Cardiac septum (tissue), 1 donor: ENCODE measurements at regions of chr19 and their contacts with region 1.

Region 1: DNA sequence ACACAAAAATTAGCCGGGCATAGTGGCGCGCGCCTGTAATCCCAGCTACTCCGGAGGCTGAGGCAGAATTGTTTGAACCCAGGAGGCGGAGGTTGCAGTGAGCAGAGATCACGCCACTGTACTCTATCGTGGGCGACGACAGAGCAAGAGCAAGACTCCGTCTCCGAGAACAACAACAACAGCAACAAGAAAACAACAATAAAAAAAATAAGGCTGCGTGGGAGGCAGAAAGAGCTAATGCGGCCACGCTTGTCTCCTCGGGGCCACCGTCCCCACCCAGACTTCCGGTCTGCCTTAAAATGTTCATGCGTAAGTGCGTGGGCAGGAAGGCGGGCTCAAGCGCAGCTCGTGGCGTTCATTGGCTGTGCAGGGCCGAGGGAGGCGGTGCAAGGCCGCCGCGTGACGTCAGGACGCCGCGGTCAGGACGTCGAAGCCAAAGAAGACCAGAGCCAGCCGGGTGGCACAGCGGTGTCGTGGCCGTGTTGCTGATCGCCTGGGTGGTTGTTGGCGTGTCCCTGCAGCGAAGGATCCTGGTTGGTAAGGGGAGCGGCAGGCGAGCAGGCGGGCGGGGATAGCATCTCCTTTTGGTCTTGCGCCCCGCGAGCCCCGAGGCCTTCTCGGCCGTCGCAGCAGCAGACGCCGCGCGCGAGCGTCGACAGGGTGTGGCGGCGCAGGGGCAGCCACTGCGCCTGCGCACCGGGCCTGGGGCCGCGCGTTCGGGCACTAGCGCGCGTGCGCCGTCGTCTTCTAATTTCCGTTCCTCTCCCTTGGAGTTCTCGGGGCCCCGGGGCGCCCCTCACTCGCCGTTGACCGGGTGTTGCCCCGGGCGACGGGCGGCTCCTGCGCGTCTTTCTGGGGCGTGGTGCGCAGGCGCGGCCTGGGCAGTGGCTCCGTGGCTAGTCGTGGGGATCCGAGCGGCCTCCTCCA is at the start of gene LENG8:
- DNase-seq: peak; percentile 99
- total RNA-seq, gene LENG8: 86.5 TPM

Region 2: DNA sequence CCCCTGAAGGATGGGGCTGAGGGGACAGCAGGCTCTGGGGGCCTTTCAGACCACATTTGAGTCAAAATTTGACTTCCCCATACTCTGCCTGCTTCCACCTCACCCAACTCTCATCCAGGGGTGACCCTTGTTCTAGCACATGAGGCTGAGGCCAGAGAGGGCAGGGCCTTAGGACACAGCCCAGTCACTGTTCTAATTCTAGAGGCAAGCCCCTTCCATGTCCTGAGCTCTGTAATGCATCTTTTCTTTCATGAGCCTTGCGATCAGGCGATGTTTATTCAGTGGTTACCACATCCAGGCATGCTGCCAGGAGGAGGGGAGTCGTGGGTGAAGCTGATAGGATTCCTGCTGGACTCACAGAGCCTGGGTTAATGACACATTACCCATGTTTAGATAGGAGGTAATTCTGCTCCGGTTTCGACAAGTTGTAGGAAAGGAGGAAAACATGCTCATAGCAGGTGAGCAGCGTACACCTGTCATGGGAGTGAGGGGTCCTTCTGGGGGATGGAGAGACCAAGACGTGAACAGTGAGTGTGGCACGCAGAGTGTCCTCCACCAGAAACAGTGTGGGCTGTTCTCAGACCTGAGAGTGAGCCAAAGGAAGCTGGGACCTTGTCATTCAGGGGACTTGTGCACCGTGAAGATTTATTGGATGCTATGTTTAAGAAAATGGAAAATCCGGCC is 239.1 kb before region 1 on chr19:
- intact Hi-C with region 1: loop called (anchors 10 kb)
- DNase-seq: peak; percentile 85

Region 3: GRCh38 chr19:54463531-54464043 is 14.6 kb after region 1 on chr19 and contains the start of gene LENG9:
- intact Hi-C with region 1: loop called (anchors 1 kb)
- DNase-seq: peak; percentile 98
- total RNA-seq, gene LENG9: 2.9 TPM